ENCODE measurements at regions of chr21 and their contacts with region 1.

Region 1: DNA sequence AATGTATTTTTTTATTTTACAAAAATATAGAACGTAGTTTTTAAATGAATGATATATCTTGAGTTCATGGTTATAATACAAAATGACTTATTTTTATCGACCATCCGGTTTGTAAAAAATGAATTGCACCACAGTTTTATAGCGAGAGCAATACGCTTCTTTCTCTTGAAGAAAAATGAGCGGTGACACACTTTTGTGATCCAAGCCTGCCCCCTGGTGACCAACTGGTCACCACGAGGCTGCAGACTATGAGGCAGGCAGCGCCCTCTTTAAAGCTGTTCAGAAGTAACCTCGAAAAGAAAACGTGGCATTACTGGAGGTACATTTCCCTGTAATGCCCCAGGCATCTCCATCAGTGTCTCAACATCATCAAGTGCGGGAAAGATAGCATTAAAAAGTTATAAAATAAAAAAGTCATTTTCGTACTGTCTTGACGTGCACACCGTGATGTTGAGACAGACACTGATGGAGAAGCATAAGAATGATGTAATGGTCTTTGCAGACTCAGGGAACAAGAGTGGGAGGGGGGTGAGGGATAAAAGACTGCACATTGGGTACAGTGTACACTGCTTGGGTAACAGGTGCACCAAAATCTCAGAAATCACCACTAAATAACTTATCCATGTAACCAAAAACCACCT is 734.2 kb upstream of the ADAMTS5 start:
- DNase-seq: peak; percentile 88 to 90
- H3K4me3 ChIP-seq: no peak overlapping the region
- H3K27ac ChIP-seq: peak overlapping the region in 1 of 2 donors; percentile 17
- H3K4me1 ChIP-seq: no peaks in the 10 kb centered on the region
- H3K27me3 ChIP-seq: no peaks in the 10 kb centered on the region
- CTCF ChIP-seq: peak; percentile 82 to 90 (median 88)
- POLR2A ChIP-seq: no peak

Region 2: DNA sequence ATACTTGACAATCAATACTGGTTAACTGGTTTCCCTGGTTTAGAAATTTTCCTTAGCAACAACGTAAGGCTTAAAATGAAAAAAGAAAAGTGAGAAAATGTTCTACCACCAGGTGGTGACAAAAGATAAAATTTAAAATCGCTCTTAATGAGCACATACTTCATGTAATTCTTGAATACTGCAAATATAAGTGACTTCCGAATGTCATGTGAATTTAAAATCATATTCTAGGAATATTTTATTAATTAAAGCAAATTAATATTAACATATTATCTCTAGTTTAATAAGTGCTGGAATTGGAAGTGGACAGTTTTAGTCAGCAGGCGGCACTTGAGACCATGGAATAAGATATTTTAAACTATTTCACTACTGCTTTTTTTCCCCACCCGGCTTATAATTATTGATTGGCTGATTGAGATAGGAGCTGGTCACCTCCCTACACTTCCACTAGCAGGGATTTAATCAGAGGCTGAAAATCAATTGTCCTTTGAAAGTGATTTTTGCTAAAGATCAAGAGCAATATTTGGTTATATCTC is 850.9 kb before region 1 on chr21:
- intact Hi-C with region 1: loop called (anchors 5 kb)
- DNase-seq: no peak
- H3K4me3 ChIP-seq: no peak overlapping the region
- H3K27ac ChIP-seq: peak overlapping the region in 1 of 2 donors; percentile 99
- H3K4me1 ChIP-seq: no peaks in the 10 kb centered on the region
- H3K27me3 ChIP-seq: no peaks in the 10 kb centered on the region
- CTCF ChIP-seq: peak; percentile 68 to 89 (median 78)
- POLR2A ChIP-seq: no peak

Region 3: DNA sequence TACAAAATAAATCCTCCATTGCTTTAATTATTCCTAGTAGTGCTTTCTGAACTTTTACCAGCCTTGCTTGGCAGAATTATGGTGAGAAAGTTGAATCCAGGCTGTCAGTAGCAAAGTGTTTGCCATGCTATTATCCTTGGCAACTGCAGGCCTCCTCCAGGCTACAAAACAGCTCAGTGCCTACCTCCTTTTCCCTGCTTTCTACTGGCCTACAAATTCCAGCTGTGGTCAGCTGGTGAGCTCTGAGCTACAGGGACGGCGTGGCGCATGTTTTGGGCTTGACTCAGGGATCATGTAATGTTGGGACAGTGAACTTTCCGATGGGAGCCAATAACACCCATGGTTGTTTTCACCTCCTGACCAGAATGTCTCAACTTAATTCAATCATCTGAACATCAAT is 278.1 kb before region 1 on chr21:
- intact Hi-C with region 1: no loop called
- DNase-seq: peak; percentile 39 to 50
- H3K4me3 ChIP-seq: no peak overlapping the region
- H3K27ac ChIP-seq: peak overlapping the region in 1 of 2 donors; percentile 61
- H3K4me1 ChIP-seq: no peaks in the 10 kb centered on the region
- H3K27me3 ChIP-seq: no peaks in the 10 kb centered on the region
- CTCF ChIP-seq: no peak
- POLR2A ChIP-seq: no peak

Region 4: DNA sequence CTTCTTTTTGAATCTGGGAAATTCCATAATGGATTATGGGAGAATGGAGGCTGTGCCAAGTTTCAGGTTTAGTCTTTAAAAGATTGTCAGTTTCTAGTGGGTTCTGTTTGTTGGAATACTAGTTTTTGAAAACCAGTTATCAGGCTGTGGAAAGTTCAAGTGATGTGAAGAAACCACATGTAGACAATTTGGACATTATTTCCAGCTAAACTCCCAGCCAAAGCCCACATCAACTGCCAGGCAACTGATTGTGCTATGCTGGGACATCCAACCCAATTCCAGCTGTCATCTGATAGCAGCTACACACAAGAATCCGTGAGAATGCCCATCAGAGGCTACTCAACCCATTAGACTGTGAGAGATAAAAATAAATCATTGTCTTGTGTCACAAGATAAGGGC is 188.1 kb before region 1 on chr21:
- intact Hi-C with region 1: no loop called
- DNase-seq: no peak
- H3K4me3 ChIP-seq: no peak overlapping the region
- H3K27ac ChIP-seq: no peak overlapping the region
- H3K4me1 ChIP-seq: no peaks in the 10 kb centered on the region
- H3K27me3 ChIP-seq: no peaks in the 10 kb centered on the region
- CTCF ChIP-seq: no peak
- POLR2A ChIP-seq: no peak

Region 5: DNA sequence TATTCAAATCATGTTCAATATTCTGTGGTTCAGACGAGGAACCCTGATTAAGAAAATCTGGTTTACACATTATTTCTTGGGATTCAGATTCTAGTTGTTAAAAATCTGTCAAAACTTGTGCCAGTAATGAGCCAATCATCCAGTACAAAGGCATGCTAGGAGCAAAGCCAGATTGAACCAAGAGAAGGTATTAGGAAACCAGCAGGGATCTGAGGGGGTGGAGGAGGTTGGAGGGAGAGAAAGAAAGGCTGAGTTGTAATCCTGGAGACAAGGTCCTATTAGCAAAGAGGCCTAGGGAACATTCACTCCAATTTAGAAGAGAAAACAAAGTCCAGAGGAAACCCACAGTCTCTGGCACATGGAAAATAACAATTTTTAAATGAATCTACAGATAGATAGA is 938.6 kb after region 1 on chr21:
- intact Hi-C with region 1: no loop called
- DNase-seq: no peak
- H3K4me3 ChIP-seq: no peak overlapping the region
- H3K27ac ChIP-seq: no peak overlapping the region
- H3K4me1 ChIP-seq: no peaks in the 10 kb centered on the region
- H3K27me3 ChIP-seq: no peaks in the 10 kb centered on the region
- CTCF ChIP-seq: no peak
- POLR2A ChIP-seq: no peak

Measured in uterus (tissue), 4 donors.